Heart left ventricle (tissue), 16 donors: ENCODE measurements at regions of chr19 and their contacts with region 1.

Region 1: DNA sequence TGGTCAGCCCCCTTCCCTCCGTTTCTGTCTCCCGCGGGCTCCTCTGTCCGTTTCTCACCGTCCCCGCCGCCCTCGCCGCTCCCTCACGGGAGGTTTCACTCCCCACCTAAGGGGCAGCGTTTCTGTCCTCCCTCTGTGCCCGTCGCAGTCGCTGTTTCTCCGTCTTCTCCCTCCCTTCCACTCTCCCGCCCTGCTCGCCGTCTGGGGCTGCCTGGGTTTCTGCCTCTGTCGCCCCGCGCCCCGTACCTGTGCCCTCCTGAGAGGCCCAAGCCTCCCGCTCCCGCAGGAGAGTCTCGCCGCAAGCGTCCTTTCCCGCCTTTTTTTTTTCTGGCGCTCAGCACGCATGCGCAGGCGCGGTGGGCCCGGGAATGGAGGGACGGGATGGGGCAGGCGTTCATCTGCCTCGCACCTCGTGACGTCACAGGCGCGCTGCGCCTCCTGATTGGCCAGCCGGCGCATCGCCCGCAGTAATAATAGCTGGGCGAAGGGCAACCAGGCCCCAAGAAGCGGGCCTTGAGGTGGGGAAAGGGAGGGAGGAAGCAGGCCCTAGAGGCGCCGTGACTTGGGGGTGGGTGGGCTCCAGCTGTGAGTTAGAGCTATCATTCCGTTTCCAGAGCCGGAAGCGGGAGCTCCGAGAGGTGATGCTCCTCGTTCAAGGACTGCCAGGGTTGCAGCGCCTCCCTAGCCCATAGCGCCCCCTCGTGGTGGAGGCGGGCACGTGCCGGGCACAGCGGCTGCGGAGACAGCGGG is 15.4 kb downstream of the SSC5D start:
- DNase-seq: peak; percentile 93 to 98 (median 95)
- ATAC-seq: peak; percentile 95 to 99 (median 98)
- H3K4me3 ChIP-seq: peak overlapping the region in 11 of 12 donors; percentile 30 to 64 (median 53)
- H3K27ac ChIP-seq: peak overlapping the region in 11 of 12 donors; percentile 47 to 83 (median 70)
- H3K4me1 ChIP-seq: peaks cover 0 to 12% (median 5%) of the 10 kb centered on the region in 12 donors
- H3K27me3 ChIP-seq: no peaks in the 10 kb centered on the region
- CTCF ChIP-seq: peak; percentile 98 to 100 (median 99)
- POLR2A ChIP-seq: no peak

Region 2: GRCh38 chr19:54882758-54883157 is 620.9 kb before region 1 on chr19:
- intact Hi-C with region 1: loop called in 1 of 10 experiments (anchors 5 kb)
- DNase-seq: no peak
- ATAC-seq: no peak
- H3K4me3 ChIP-seq: no peak overlapping the region
- H3K27ac ChIP-seq: no peak overlapping the region
- H3K4me1 ChIP-seq: no peaks in the 10 kb centered on the region
- H3K27me3 ChIP-seq: peaks cover 0 to 60% (median 9%) of the 10 kb centered on the region in 9 donors
- CTCF ChIP-seq: no peak
- POLR2A ChIP-seq: no peak

Region 3: DNA sequence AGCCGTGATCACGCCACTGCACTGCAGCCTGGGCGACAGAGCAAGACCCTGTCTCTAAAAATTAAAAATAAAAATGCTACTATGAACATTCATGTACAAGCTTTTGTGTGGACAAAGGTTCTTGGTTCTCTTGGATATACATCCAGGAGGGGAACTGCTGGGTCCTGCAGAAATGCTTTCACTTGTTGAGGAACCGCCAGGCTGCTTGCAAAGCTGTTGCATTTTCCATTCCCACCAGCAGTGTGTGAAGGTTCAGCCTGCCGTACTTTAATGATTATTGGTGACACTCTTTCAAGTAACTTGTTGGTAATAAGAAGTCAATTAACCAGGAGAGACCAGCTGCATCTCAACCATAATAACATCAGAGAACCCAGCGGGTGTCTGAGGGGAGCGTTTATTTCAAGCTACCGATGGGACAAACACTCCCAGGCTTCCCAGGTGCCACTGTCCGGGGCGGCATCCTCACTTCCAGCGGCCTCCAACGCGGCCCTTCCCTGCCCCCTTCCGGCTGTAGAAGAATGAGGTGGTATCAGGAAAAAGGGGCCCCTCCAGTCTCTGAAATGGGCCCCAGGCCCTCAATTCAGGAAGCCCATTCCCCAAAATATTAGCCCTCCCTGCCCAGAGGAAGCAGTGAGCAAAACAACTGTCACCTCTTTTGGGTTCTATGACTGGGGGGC is 371.1 kb before region 1 on chr19:
- intact Hi-C with region 1: loop called in 1 of 10 experiments (anchors 10 kb)
- DNase-seq: no peak
- ATAC-seq: no peak
- H3K4me3 ChIP-seq: no peak overlapping the region
- H3K27ac ChIP-seq: no peak overlapping the region
- H3K4me1 ChIP-seq: no peaks in the 10 kb centered on the region
- H3K27me3 ChIP-seq: peaks cover 0 to 20% (median 0%) of the 10 kb centered on the region in 9 donors
- CTCF ChIP-seq: peak in 4 of 12 donors; percentile 23 to 43 (median 29)
- POLR2A ChIP-seq: no peak

Region 4: DNA sequence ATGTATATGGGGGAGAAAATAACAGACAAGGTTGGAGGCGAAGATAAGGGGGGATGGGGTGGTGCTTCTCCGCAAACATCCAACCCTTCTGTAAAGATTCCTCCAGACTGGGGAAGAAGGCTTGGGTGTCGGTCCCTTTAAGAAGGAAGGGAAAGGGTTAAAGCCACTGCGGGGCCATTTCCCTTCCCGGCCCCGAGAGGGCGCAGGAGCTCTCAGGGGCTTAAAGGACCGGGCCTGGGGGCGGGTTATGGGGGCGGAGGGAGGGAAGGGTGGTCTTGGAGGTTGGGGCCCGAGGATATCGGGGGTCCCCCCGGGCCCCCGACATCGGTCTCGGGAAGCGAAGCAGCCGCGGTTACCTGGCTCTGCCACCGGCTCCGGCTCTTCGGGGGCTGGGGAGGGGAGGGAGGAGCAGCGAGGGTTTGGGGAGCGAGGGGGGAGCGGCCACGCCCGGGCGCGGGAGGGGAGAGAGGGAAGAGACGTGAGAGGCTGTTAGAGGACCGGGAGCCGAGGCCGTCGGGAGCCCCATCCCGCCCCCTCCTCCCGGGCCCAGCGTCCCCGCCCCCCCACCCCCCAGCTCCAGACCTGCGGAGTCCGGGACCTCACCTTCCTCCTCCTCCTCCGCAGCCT is 357.5 kb before region 1 on chr19:
- intact Hi-C with region 1: loop called in 7 of 10 experiments (anchors 1 to 5 kb)
- DNase-seq: peak in 2 of 5 donors; percentile 28 to 51
- ATAC-seq: peak in 1 of 4 donors; percentile 1
- H3K4me3 ChIP-seq: peak overlapping the region in 2 of 12 donors; percentile 7 to 20
- H3K27ac ChIP-seq: peak overlapping the region in 2 of 12 donors; percentile 30 to 33
- H3K4me1 ChIP-seq: peaks cover 0 to 36% (median 2%) of the 10 kb centered on the region in 12 donors
- H3K27me3 ChIP-seq: peaks cover 4 to 71% (median 32%) of the 10 kb centered on the region in 9 donors
- CTCF ChIP-seq: peak in 10 of 12 donors; percentile 20 to 46 (median 34)
- POLR2A ChIP-seq: no peak

Region 5: GRCh38 chr19:55301459-55302317 is 202.0 kb before region 1 on chr19:
- intact Hi-C with region 1: loop called in 2 of 10 experiments (anchors 5 kb)
- DNase-seq: peak; percentile 84 to 96 (median 90)
- ATAC-seq: peak; percentile 80 to 93 (median 90)
- H3K4me3 ChIP-seq: peak overlapping the region in 10 of 12 donors; percentile 30 to 58 (median 46)
- H3K27ac ChIP-seq: peak overlapping the region in 1 of 12 donors; percentile 34
- H3K4me1 ChIP-seq: peaks cover 0 to 10% (median 4%) of the 10 kb centered on the region in 12 donors
- H3K27me3 ChIP-seq: no peaks in the 10 kb centered on the region
- CTCF ChIP-seq: peak; percentile 94 to 99 (median 97)
- POLR2A ChIP-seq: no peak

Region 6: DNA sequence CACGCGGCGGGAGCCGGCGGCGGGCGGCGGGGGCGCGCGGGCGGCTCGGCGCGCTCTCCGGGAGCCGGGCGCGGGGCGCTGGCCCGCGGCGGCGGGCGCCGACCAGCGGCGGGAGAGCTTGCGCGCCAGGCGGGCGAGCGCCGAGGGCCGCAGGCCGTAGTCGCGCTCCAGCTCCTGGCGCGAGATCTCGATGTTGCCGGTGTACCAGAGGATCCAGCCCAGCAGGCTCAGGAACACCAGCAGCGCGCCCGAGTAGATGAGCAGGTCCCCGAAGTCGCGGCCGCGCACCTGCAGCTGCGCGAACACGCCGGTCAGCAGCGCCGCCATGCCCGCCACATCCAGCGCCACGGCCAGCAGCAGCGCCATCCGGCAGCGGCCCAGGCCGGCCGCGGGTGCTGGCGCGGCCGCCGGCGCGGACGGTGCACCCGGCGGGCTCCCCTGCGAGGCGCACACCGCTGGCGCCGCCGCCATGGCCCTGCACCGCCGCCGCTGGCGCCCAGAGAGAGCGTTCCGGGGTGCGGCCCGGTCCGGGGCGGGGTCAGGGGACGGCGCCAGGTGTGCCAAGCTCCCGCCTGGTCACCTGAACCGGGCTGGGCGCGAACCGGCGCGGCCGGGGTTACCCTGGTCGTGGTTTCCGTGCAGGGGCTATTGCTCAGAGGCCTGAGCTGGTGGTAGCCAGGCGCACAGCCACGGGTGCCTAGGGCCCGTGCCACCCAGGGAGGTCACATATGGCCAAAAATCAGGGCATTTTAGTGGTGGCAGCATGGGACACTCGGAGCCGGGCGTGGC is 119.7 kb before region 1 on chr19 and contains the start of gene TMEM238:
- intact Hi-C with region 1: no loop called
- DNase-seq: peak; percentile 39 to 78 (median 53)
- ATAC-seq: peak in 1 of 4 donors; percentile 4
- H3K4me3 ChIP-seq: peak within 1 kb of the TSS; percentile 48 to 87 (median 78)
- H3K27ac ChIP-seq: peak within 1 kb of the TSS; percentile 79 to 97 (median 94)
- H3K4me1 ChIP-seq: peaks cover 14 to 49% (median 37%) of the 10 kb centered on the region in 12 donors
- H3K27me3 ChIP-seq: no peaks in the 10 kb centered on the region
- CTCF ChIP-seq: peak in 7 of 12 donors; percentile 17 to 53 (median 35)
- POLR2A ChIP-seq: no peak
- total RNA-seq, gene TMEM238: 0.35 to 2.2 (median 0.56) TPM in 7 of 9 donors, not detected in the others

Region 7: GRCh38 chr19:55467236-55468053 is 36.2 kb before region 1 on chr19:
- intact Hi-C with region 1: loop called (anchors 1 to 5 kb)
- DNase-seq: peak; percentile 62 to 88 (median 74)
- ATAC-seq: peak; percentile 74 to 89 (median 88)
- H3K4me3 ChIP-seq: no peak overlapping the region
- H3K27ac ChIP-seq: no peak overlapping the region
- H3K4me1 ChIP-seq: peaks cover 0 to 12% (median 7%) of the 10 kb centered on the region in 12 donors
- H3K27me3 ChIP-seq: no peaks in the 10 kb centered on the region
- CTCF ChIP-seq: peak; percentile 96 to 100 (median 99)
- POLR2A ChIP-seq: no peak

Region 8: DNA sequence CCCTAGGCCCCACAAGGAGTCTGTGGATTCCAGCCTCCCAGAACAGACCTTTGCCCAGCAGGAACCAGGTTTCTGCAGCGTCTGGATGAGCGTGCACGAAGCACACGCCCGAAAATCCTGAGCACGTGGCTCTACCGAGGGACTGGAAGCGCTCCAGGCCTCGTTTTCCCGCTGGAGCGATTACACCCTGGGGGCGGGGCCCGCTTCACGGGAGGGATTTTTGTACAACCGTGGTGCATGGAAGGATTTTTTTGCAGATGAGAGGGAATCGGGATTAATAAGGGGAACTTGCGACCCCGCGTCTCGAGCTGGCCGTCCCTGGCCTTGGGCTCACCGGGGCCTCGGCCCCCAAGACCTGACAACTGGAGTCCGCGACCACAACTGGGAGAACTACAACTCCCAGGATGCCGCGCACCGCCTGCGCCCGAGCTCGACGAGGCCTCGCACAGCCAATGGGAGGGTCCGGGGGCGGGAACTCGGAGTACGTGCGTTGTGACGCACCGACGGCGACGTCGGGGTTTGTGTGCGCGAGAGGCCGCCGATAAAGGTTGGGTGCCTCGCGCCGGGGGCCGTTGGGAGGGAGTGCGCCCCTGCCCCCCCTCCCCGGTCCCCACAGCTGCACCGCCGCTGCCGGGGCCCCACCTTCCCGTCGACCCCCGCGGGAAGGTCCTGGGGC is 27.4 kb before region 1 on chr19 and contains the start of gene ZNF628:
- intact Hi-C with region 1: loop called in 1 of 10 experiments (anchors 2 kb)
- DNase-seq: peak; percentile 99 to 100 (median 99)
- ATAC-seq: peak; percentile 95 to 98 (median 98)
- H3K4me3 ChIP-seq: peak within 1 kb of the TSS; percentile 34 to 81 (median 68)
- H3K27ac ChIP-seq: peak within 1 kb of the TSS; percentile 79 to 99 (median 94)
- H3K4me1 ChIP-seq: peaks cover 0 to 31% (median 19%) of the 10 kb centered on the region in 12 donors
- H3K27me3 ChIP-seq: no peaks in the 10 kb centered on the region
- CTCF ChIP-seq: no peak
- POLR2A ChIP-seq: peak; percentile 40 to 63
- total RNA-seq, gene ZNF628: 2.3 to 10.3 (median 4.6) TPM